Ascending aorta (tissue), 2 donors: ENCODE measurements at regions of chr2 and their contacts with region 1.

Region 1: DNA sequence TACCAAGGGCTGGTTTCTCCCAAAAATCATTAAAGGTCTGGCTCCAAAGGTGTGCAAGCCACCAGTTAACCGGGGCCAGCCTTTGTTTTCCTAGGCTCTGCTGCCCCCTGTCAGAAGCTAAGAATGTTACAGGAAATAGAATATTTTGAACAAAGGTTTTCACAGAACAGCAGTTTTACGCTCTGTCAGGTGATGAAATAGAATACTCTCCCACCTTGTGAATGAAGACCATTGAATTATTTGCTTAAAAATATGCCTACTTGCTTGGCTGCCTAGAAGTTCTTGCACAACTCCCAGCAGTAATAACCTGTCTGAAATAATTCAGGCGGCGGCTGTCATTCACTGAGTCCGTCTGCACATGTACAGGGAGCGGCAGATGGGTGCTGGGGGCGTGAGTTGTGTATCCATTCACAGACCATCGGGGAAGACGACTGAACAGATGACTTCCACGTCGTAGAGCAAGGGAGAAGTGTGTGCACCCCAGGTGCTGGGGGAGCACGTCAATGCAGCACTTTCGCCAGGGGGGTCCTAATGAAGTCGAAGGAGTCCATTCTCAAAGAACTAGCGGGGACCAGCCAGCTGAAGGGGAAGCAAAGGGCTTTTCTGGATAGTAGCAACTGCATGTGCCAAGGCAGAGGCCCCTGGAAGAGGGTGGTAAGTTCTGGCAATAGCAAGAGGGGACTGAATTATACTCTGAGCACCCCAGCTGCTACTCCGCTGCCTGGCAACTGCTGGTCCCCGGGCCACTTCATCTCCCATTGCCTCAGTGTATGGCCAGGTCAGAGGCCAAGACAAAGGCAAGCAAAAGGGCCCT is 56.1 kb downstream of the SF3B1 start:
- DNase-seq: no peak
- H3K4me3 ChIP-seq: peak overlapping the region; percentile 43 to 54
- H3K27ac ChIP-seq: peak overlapping the region; percentile 50 to 51
- H3K4me1 ChIP-seq: no peaks in the 10 kb centered on the region
- H3K27me3 ChIP-seq: no peaks in the 10 kb centered on the region
- CTCF ChIP-seq: peak; percentile 69 to 79 (median 71)

Region 2: GRCh38 chr2:197011799-197012641 is 366.7 kb before region 1 on chr2:
- intact Hi-C with region 1: loop called (anchors 1 kb)
- DNase-seq: no peak
- H3K4me3 ChIP-seq: no peak overlapping the region
- H3K27ac ChIP-seq: no peak overlapping the region
- H3K4me1 ChIP-seq: no peaks in the 10 kb centered on the region
- H3K27me3 ChIP-seq: no peaks in the 10 kb centered on the region
- CTCF ChIP-seq: peak; percentile 52 to 71 (median 55)

Region 3: DNA sequence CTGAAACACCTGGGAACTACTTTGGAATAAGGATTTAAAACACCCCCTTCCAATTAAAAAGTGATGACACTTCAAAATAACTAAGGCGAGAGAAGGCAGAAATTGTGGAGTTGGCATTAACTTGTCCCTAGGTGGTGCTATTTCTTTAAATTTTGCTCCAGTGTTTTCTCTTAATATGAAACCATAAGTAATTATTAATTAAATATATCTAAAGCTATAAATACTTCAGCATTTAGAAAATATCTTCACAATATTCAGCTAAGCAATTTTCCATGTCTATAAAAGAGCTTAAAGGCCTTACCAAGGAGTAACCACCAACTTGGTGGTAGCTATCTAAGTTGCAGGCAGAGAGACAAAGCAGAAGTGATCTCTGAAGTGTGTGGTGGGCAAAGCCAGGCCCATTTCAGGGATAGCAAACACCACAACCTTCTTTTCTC is 265.4 kb before region 1 on chr2:
- intact Hi-C with region 1: loop called (anchors 2 kb)
- DNase-seq: no peak
- H3K4me3 ChIP-seq: no peak overlapping the region
- H3K27ac ChIP-seq: no peak overlapping the region
- H3K4me1 ChIP-seq: peaks cover 0 to 5% of the 10 kb centered on the region in 2 donors
- H3K27me3 ChIP-seq: no peaks in the 10 kb centered on the region
- CTCF ChIP-seq: peak; percentile 37 to 70 (median 46)

Region 4: GRCh38 chr2:197657562-197657961 is 278.9 kb after region 1 on chr2:
- intact Hi-C with region 1: no loop called
- DNase-seq: no peak
- H3K4me3 ChIP-seq: no peak overlapping the region
- H3K27ac ChIP-seq: no peak overlapping the region
- H3K4me1 ChIP-seq: no peaks in the 10 kb centered on the region
- H3K27me3 ChIP-seq: no peaks in the 10 kb centered on the region
- CTCF ChIP-seq: no peak